ENCODE measurements at regions of chr1 and their contacts with region 1.

Region 1: DNA sequence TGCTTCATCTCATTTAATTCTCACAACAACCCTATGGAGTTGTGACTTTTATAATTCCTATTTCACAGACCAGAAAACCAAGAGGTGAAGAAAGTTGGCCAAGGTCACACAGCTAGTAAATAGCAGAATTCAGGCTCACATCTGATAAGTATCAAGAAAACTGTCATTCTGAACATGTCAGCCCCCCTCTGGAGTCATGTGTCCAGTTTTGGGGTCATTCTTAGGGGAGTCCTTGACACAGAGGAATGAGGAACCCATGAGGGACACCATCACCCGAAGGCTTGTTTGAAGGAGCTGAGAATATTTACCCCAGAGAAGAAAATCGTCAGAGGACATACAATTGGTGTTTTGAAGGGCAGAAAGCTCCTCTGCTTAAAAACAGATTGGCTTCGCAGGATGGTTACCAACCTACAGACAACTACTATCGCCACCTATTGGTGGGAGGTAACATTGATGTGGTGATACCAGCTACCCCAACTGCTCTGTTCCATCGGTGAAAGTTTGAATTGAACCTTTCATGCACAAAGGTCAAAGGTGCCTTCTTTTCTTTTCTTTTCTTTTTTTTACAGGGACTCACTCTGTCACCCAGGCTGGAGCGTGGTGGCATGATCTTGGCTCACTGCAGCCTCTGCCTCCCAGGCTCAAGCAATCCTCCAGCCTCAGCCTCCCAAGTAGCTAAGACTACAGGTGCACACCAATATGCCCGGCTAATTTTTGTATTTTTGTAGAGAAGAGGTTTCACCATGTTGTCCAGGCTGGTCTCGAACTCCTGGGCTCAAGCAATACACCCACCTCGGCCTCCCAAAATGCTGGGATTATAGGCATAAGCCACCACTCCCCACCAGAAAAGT is 31.3 kb downstream of the NCMAP start:
- DNase-seq: peak in 8 of 9 donors; percentile 32 to 83 (median 76)
- ATAC-seq: peak; percentile 98
- H3K4me3 ChIP-seq: no peak overlapping the region
- H3K4me3 Mint-ChIP-seq: peak overlapping the region in 4 of 10 donors; percentile 12 to 38 (median 35)
- H3K27ac ChIP-seq: peak overlapping the region; percentile 35
- H3K27ac Mint-ChIP-seq: peak overlapping the region in 8 of 9 donors; percentile 78 to 93 (median 85)
- H3K4me1 ChIP-seq: peaks cover 0 to 7% of the 10 kb centered on the region in 2 donors
- H3K4me1 Mint-ChIP-seq: peaks cover 0 to 9% (median 7%) of the 10 kb centered on the region in 7 donors
- H3K27me3 ChIP-seq: no peaks in the 10 kb centered on the region
- H3K27me3 Mint-ChIP-seq: peaks cover 0 to 14% (median 0%) of the 10 kb centered on the region in 5 donors

Region 2: DNA sequence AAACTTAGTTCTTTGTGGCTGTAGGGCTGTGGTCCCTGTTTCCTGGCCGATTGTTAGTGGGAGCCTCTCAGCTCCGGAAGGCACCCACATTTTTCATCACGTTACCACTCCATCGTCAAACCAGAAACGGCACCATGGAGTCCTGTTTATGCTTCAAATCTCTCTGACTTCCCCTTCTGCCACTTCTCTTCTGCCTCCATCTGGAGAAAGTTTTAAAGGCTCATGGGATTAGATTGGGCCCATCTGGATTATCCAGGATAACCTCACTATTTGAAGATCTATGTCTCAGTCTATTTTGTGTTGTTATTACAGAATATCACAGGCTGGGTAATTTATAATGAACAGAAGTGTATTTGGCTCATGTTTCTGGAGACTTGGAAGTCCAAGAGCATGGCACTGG is 425.0 kb before region 1 on chr1:
- CTCF ChIA-PET with region 1: no interaction called
- POLR2A ChIA-PET with region 1: no interaction called
- intact Hi-C with region 1: no loop called
- DNase-seq: no peak
- ATAC-seq: no peak
- H3K4me3 ChIP-seq: no peak overlapping the region
- H3K4me3 Mint-ChIP-seq: no peak overlapping the region
- H3K27ac ChIP-seq: no peak overlapping the region
- H3K27ac Mint-ChIP-seq: peak overlapping the region in 2 of 9 donors; percentile 7 to 53
- H3K4me1 ChIP-seq: no peaks in the 10 kb centered on the region
- H3K4me1 Mint-ChIP-seq: peaks cover 0 to 7% (median 4%) of the 10 kb centered on the region in 7 donors
- H3K27me3 ChIP-seq: no peaks in the 10 kb centered on the region
- H3K27me3 Mint-ChIP-seq: no peaks in the 10 kb centered on the region

Region 3: GRCh38 chr1:24201941-24202440 is 385.2 kb before region 1 on chr1:
- CTCF ChIA-PET with region 1: interaction called, 47 read pairs
- POLR2A ChIA-PET with region 1: no interaction called
- intact Hi-C with region 1: loop called (anchors 1 kb)
- DNase-seq: peak in 7 of 9 donors; percentile 29 to 54 (median 42)
- ATAC-seq: peak; percentile 53
- H3K4me3 ChIP-seq: no peak overlapping the region
- H3K4me3 Mint-ChIP-seq: no peak overlapping the region
- H3K27ac ChIP-seq: no peak overlapping the region
- H3K27ac Mint-ChIP-seq: no peak overlapping the region
- H3K4me1 ChIP-seq: peaks cover 0 to 4% of the 10 kb centered on the region in 2 donors
- H3K4me1 Mint-ChIP-seq: peaks cover 0 to 16% (median 5%) of the 10 kb centered on the region in 7 donors
- H3K27me3 ChIP-seq: no peaks in the 10 kb centered on the region
- H3K27me3 Mint-ChIP-seq: peaks cover 0 to 5% (median 0%) of the 10 kb centered on the region in 5 donors

Region 4: GRCh38 chr1:24481101-24481500 is 106.1 kb before region 1 on chr1:
- CTCF ChIA-PET with region 1: interaction called, 6 read pairs
- POLR2A ChIA-PET with region 1: interaction called, 3 read pairs
- intact Hi-C with region 1: loop called in 1 of 2 experiments (anchors 5 kb)
- DNase-seq: peak in 8 of 9 donors; percentile 50 to 80 (median 75)
- ATAC-seq: peak; percentile 84
- H3K4me3 ChIP-seq: peak overlapping the region; percentile 44
- H3K4me3 Mint-ChIP-seq: peak overlapping the region; percentile 74 to 95 (median 83)
- H3K27ac ChIP-seq: peak overlapping the region; percentile 83
- H3K27ac Mint-ChIP-seq: peak overlapping the region; percentile 93 to 99 (median 98)
- H3K4me1 ChIP-seq: peaks cover 49 to 59% of the 10 kb centered on the region in 2 donors
- H3K4me1 Mint-ChIP-seq: peaks cover 36 to 86% (median 77%) of the 10 kb centered on the region in 7 donors
- H3K27me3 ChIP-seq: no peaks in the 10 kb centered on the region
- H3K27me3 Mint-ChIP-seq: no peaks in the 10 kb centered on the region

Region 5: DNA sequence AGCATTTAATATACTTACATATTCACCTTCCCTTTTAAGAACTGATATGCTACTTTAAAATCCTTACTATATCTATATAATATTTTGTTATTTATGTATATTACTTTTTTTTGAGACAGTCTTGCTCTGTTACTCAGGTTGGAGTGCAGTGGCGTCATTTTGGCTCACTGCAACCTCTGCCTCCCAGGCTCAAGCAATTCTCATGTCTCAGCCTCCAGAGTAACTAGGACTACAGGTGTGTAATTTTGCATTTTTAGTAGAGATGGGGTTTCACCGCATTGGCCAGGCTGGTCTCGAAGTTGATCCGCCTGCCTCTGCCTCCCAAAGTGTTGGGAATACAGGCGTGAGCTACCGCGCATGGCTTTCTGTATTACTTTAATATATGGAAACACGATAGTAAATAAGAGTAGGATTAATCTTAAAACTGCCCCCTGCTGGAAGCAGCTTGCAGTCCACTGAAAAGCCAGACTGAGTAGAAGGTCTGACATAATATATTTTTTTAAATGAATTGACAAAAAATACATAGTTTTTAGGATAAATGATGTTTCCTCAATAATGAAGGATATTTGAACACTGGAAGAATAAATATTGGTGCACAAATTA is 60.2 kb before region 1 on chr1:
- CTCF ChIA-PET with region 1: interaction called, 12 read pairs
- POLR2A ChIA-PET with region 1: interaction called, 9 read pairs
- intact Hi-C with region 1: loop called in 1 of 2 experiments (anchors 2 kb)
- DNase-seq: peak in 8 of 9 donors; percentile 28 to 66 (median 56)
- ATAC-seq: peak; percentile 69
- H3K4me3 ChIP-seq: no peak overlapping the region
- H3K4me3 Mint-ChIP-seq: peak overlapping the region in 7 of 10 donors; percentile 23 to 57 (median 39)
- H3K27ac ChIP-seq: peak overlapping the region; percentile 40
- H3K27ac Mint-ChIP-seq: peak overlapping the region in 8 of 9 donors; percentile 32 to 93 (median 84)
- H3K4me1 ChIP-seq: peaks cover 0 to 49% of the 10 kb centered on the region in 2 donors
- H3K4me1 Mint-ChIP-seq: peaks cover 31 to 86% (median 71%) of the 10 kb centered on the region in 7 donors
- H3K27me3 ChIP-seq: no peaks in the 10 kb centered on the region
- H3K27me3 Mint-ChIP-seq: no peaks in the 10 kb centered on the region

Region 6: GRCh38 chr1:24541711-24542346 is 45.4 kb before region 1 on chr1:
- CTCF ChIA-PET with region 1: interaction called, 6 read pairs
- POLR2A ChIA-PET with region 1: interaction called, 3 read pairs
- intact Hi-C with region 1: loop called in 1 of 2 experiments (anchors 2 kb)
- DNase-seq: peak in 3 of 9 donors; percentile 13 to 33 (median 14)
- ATAC-seq: no peak
- H3K4me3 ChIP-seq: no peak overlapping the region
- H3K4me3 Mint-ChIP-seq: no peak overlapping the region
- H3K27ac ChIP-seq: peak overlapping the region; percentile 38
- H3K27ac Mint-ChIP-seq: peak overlapping the region in 7 of 9 donors; percentile 45 to 93 (median 76)
- H3K4me1 ChIP-seq: peaks cover 10 to 29% of the 10 kb centered on the region in 2 donors
- H3K4me1 Mint-ChIP-seq: peaks cover 10 to 74% (median 62%) of the 10 kb centered on the region in 7 donors
- H3K27me3 ChIP-seq: no peaks in the 10 kb centered on the region
- H3K27me3 Mint-ChIP-seq: no peaks in the 10 kb centered on the region

Region 7: DNA sequence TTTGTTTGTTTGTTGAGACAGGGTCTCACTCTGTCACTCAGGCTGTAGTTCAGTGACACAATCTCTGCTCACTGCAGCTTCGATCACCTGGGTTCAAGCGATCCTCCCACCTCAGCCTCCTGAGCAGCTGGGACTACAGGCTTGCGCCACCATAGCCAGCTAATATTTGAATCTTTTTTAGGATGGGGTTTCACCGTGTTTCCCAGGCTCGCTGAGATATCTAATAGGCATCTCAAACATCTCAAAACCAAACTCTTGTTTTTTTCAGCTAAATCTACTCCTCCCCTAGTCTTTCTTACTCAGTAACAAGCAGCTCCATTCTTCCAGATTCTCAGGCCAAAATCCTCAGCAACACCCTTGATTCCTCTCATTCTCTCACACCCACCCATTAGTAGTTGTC is 33.9 kb after region 1 on chr1:
- CTCF ChIA-PET with region 1: no interaction called
- POLR2A ChIA-PET with region 1: no interaction called
- intact Hi-C with region 1: no loop called
- DNase-seq: no peak
- ATAC-seq: no peak
- H3K4me3 ChIP-seq: no peak overlapping the region
- H3K4me3 Mint-ChIP-seq: no peak overlapping the region
- H3K27ac ChIP-seq: no peak overlapping the region
- H3K27ac Mint-ChIP-seq: no peak overlapping the region
- H3K4me1 ChIP-seq: no peaks in the 10 kb centered on the region
- H3K4me1 Mint-ChIP-seq: no peaks in the 10 kb centered on the region
- H3K27me3 ChIP-seq: no peaks in the 10 kb centered on the region
- H3K27me3 Mint-ChIP-seq: peaks cover 0 to 52% (median 13%) of the 10 kb centered on the region in 5 donors

Region 8: GRCh38 chr1:24714859-24715520 is 127.8 kb after region 1 on chr1:
- CTCF ChIA-PET with region 1: no interaction called
- POLR2A ChIA-PET with region 1: no interaction called
- intact Hi-C with region 1: no loop called
- DNase-seq: no peak
- ATAC-seq: no peak
- H3K4me3 ChIP-seq: no peak overlapping the region
- H3K4me3 Mint-ChIP-seq: no peak overlapping the region
- H3K27ac ChIP-seq: no peak overlapping the region
- H3K27ac Mint-ChIP-seq: no peak overlapping the region
- H3K4me1 ChIP-seq: no peaks in the 10 kb centered on the region
- H3K4me1 Mint-ChIP-seq: peaks cover 0 to 4% (median 0%) of the 10 kb centered on the region in 7 donors
- H3K27me3 ChIP-seq: no peaks in the 10 kb centered on the region
- H3K27me3 Mint-ChIP-seq: no peaks in the 10 kb centered on the region

Measured in naive thymus-derived CD4-positive, alpha-beta T cell (primary cell).